AG04450 (cell line): ENCODE measurements at regions of chr17 and their contacts with region 1.

Region 1: GRCh38 chr17:73255671-73256181 is 6.0 kb downstream of the CPSF4L start:
- DNase-seq: no peak
- H3K4me3 ChIP-seq: no peak overlapping the region
- H3K27ac ChIP-seq: no peak overlapping the region
- H3K27me3 ChIP-seq: no peaks in the 10 kb centered on the region
- CTCF ChIP-seq: peak; percentile 97

Region 2: DNA sequence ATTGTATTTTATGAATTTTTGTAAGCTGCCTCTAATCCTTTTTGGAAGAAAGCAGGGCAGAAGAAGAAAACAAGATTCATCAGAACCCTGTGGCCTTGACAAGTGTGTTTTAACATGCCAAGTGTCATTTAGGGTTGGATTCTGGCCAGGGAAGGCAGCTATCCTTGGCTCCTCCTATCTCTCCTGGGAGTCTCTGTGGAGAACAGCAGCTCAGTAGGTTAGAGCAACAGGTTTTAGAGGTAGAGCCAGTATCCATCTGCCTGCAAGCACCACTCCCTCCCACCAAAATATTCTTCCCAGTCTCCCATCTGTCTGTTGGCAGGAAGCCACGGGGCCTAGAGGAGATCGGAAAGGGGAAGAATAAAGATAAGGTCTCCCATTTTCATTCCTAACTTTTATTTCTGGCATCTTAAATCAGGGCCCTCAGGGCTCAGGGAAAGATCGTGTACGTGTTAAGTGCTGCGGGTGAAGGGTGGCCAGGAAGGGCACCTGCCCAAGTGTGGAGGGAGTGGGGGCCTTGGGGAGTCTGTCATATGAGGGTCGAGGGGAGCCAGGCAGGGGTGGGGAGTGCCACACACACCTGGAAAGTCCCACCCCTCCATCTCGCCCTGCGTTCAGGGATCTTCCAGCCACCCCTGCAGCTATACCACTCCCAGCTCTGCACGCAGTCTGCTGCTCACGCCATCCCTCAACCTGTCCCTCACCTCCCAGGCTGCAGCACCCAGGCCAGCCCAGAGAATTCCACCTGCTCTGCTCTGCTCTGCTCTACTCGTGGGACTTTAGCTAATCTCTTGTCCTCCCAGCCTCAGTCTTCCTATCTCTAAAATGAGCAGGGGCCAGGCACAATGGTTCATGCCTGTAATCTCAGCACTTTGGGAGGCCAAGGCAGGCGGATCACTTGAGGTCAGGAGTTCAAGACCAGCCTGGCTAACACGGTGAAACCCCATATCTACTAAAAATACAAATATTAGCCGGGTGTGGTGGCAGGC is 23.0 kb after region 1 on chr17:
- CTCF ChIA-PET with region 1: interaction called, 17 read pairs
- POLR2A ChIA-PET with region 1: no interaction called
- DNase-seq: no peak
- H3K4me3 ChIP-seq: no peak overlapping the region
- H3K27ac ChIP-seq: no peak overlapping the region
- H3K27me3 ChIP-seq: no peaks in the 10 kb centered on the region
- CTCF ChIP-seq: no peak

Region 3: DNA sequence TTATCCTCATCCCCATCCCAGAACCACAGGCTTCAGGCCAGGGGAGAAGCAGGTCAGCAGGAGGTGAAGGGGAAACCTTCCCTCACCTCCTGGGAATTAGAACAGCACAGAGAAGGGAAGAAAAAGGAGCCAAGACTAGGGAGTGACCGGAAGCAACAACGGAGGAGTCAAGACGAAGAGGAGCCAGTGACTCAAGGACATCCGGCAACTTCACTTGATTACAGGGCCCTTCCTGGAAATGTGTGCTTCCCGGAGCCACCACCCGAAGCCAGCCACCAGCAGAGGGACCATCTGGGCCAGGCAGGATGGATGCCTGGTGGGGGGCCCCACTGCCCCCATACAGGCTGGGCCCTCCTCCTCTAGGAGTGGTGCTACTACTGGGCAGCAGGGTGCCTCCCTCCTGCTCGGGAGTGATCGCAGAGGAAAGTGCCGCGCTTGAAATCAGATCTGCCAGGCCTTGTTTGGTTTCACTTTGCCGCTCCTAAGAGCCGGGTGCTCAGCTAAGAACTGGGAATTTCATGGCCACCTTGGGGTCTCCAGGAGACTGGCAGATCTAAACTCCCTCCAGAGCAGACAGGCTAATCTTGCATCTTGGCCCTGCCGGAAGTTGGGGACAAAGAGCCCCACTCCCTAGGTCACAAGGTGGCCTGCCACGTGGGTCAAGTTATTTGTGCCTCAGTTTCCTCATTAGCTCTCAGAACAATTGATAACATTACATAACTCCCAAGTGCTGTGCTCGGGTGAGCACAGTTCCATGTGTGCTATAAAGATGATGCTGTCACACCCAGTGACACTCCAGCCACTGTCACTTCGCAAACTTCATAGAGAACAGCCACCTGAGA is 49.5 kb after region 1 on chr17:
- CTCF ChIA-PET with region 1: interaction called, 12 read pairs
- POLR2A ChIA-PET with region 1: interaction called, 3 read pairs
- DNase-seq: no peak
- H3K4me3 ChIP-seq: peak overlapping the region; percentile 56
- H3K27ac ChIP-seq: peak overlapping the region; percentile 93
- H3K27me3 ChIP-seq: no peaks in the 10 kb centered on the region
- CTCF ChIP-seq: peak; percentile 16; the same call in 1 of the 2 replicates

Region 4: GRCh38 chr17:73342050-73342522 is 86.4 kb after region 1 on chr17:
- CTCF ChIA-PET with region 1: interaction called, 11 read pairs
- POLR2A ChIA-PET with region 1: no interaction called
- DNase-seq: no peak
- H3K4me3 ChIP-seq: no peak overlapping the region
- H3K27ac ChIP-seq: peak overlapping the region; percentile 92
- H3K27me3 ChIP-seq: no peaks in the 10 kb centered on the region
- CTCF ChIP-seq: no peak

Region 5: DNA sequence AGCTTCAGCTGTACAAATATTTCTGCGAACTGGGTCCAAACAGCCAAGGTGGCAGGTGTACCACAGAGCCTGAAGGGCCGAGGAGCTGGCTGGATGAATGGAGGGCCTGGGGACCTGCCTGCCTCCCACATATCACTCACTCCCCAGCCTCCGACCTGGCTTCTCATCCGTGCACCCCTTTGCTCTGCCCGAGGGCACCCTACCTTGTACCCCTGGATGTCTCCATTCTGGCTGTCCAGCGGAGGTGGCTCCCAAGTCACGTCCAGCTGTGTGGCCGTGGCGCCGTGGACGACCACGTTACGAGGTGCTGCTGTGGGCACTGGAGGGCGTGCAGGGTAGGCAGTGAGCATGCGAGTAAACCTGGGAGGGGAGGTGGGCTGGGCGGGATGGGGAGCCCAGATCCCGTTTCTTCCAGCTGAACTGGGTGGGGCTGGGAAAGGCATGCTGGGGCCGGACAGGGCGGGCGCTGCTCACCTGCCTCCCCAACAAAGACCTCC is 123.3 kb after region 1 on chr17:
- CTCF ChIA-PET with region 1: interaction called, 25 read pairs
- POLR2A ChIA-PET with region 1: no interaction called
- DNase-seq: no peak
- H3K4me3 ChIP-seq: no peak overlapping the region
- H3K27ac ChIP-seq: no peak overlapping the region
- H3K27me3 ChIP-seq: peaks cover 24% of the 10 kb centered on the region
- CTCF ChIP-seq: no peak